ENCODE measurements at regions of chr3 and their contacts with region 1.

Region 1: DNA sequence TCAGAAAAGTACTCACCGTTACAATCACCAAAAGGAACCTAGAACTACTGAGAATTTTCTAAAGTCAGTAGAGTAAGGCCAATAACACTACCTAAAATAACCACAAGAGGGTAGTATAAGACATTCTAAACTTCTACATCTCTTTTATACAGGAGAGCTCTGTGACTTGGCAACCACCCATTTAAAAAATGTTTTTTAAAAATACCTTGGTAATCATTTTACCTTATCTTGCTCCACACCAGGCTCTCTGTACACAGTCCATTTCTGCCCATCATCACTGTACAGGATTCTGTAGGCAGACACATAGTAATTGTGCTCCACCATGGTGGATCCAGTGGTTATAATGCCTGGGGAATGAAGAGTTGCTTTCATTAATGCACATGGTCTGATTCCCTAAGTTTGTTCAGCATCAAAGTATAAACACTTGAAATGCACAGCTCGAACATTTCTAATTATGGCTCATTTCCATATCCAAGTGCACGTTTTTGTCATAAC is 54.5 kb downstream of the ST3GAL6 start:
- DNase-seq: peak; percentile 69
- H3K4me3 ChIP-seq: no peak overlapping the region
- H3K27ac ChIP-seq: no peak overlapping the region
- H3K4me1 ChIP-seq: no peaks in the 10 kb centered on the region
- CTCF ChIP-seq: peak; percentile 90

Region 2: DNA sequence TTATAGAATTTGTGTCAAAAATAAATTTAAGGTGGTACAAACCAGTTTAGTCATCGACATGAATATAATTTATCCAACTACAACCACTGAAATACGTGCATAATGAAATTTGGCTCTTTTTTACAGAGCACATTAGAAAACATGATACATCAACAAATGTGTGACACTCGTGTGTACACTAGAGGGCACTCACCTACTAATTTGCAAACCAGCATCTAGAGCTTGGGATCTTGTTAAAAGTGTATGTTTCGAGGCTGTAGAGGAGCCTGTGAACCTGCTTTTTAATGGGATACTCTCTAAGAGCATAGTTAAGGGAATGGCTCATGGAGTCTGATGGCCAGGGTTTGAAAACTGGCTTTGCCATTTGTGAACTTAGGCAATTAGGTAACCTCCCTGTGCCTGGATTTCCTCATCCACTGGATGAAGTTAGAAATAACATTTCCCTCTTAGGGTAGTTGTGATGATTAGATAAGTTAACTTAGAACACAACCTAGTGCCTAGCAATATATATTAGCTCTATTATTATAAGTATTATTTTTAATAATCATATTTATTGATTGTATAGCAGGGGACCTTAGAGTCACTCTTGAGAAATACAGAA is 215.4 kb before region 1 on chr3:
- CTCF ChIA-PET with region 1: no interaction called
- POLR2A ChIA-PET with region 1: interaction called, 3 read pairs
- intact Hi-C with region 1: loop called (anchors 1 kb)
- DNase-seq: peak; percentile 59
- H3K4me3 ChIP-seq: no peak overlapping the region
- H3K27ac ChIP-seq: no peak overlapping the region
- H3K4me1 ChIP-seq: no peaks in the 10 kb centered on the region
- CTCF ChIP-seq: peak; percentile 93

Region 3: DNA sequence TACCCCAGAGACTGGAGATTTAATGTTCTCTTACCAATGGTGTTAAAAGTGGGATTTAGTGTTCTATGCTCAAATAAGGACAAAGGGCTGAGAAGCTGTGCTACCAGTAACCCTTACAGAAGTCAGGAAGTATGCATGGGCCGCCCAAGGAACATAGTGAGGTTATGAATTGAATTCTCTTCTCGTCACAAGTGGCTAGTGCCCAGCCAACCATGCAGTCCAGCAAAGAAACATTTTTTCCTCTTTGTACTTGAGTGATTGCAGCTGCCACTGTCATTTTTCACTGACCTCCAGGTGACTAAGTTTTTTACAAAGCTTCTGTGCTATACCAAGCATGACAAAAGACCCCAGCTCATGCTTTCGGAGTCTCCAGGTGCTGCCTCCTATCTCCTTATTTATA is 194.5 kb after region 1 on chr3:
- CTCF ChIA-PET with region 1: no interaction called
- POLR2A ChIA-PET with region 1: no interaction called
- intact Hi-C with region 1: loop called (anchors 5 kb)
- DNase-seq: peak; percentile 96
- H3K4me3 ChIP-seq: peak overlapping the region; percentile 54
- H3K27ac ChIP-seq: peak overlapping the region; percentile 96
- H3K4me1 ChIP-seq: peaks cover 71% of the 10 kb centered on the region
- CTCF ChIP-seq: no peak; the same call in 1 of the 2 replicates

Region 4: GRCh38 chr3:99686955-99687612 is 869.5 kb after region 1 on chr3:
- CTCF ChIA-PET with region 1: no interaction called
- POLR2A ChIA-PET with region 1: no interaction called
- intact Hi-C with region 1: loop called (anchors 10 kb)
- DNase-seq: peak; percentile 39
- H3K4me3 ChIP-seq: no peak overlapping the region
- H3K27ac ChIP-seq: no peak overlapping the region
- H3K4me1 ChIP-seq: no peaks in the 10 kb centered on the region
- CTCF ChIP-seq: peak; percentile 87

Measured in OCI-LY7 (cell line).